CD4-positive, alpha-beta T cell (primary cell): ENCODE measurements at regions of chr14 and their contacts with region 1.

Region 1: DNA sequence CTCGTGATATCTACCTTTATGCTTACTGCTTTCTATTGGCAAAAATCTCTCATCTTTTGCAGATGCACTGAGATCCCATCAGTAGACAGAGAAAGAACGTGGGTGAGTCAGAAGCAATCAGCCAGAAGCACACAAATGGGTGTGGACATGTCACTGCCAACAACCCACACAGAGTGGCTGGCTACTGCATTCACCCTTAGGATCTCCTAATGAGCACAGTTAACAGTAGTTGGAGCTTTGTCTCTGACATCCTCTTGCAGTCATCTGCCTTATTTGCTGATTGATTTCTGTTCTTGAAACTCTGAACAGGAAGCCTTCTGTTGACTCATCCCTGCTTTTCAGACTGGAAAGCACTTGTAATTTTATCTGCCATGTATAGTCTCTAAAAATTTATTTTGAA is 117.2 kb downstream of the RGS6 start:
- DNase-seq: no peak
- ATAC-seq: no peak
- H3K4me3 ChIP-seq: no peak overlapping the region
- H3K4me3 Mint-ChIP-seq: no peak overlapping the region
- H3K27ac ChIP-seq: no peak overlapping the region
- H3K27ac Mint-ChIP-seq: no peak overlapping the region
- H3K4me1 ChIP-seq: no peaks in the 10 kb centered on the region
- H3K4me1 Mint-ChIP-seq: no peaks in the 10 kb centered on the region
- H3K27me3 ChIP-seq: peaks cover 0 to 4% of the 10 kb centered on the region in 2 experiments
- H3K27me3 Mint-ChIP-seq: peaks cover 50% of the 10 kb centered on the region
- CTCF ChIP-seq: no peak

Region 2: GRCh38 chr14:70571139-70571538 is 1478.3 kb before region 1 on chr14:
- CTCF ChIA-PET with region 1: no interaction called
- POLR2A ChIA-PET with region 1: no interaction called
- intact Hi-C with region 1: loop called in 1 of 2 experiments (anchors 5 kb)
- DNase-seq: no peak
- ATAC-seq: no peak
- H3K4me3 ChIP-seq: no peak overlapping the region
- H3K4me3 Mint-ChIP-seq: no peak overlapping the region
- H3K27ac ChIP-seq: no peak overlapping the region
- H3K27ac Mint-ChIP-seq: no peak overlapping the region
- H3K4me1 ChIP-seq: no peaks in the 10 kb centered on the region
- H3K4me1 Mint-ChIP-seq: peaks cover 30% of the 10 kb centered on the region
- H3K27me3 ChIP-seq: no peaks in the 10 kb centered on the region
- H3K27me3 Mint-ChIP-seq: no peaks in the 10 kb centered on the region
- CTCF ChIP-seq: no peak